IMR-90 (cell line): ENCODE measurements at regions of chr16 and their contacts with region 1.

Region 1: GRCh38 chr16:48143812-48144368 is 11.9 kb downstream of the ABCC12 start:
- DNase-seq: no peak
- ATAC-seq: no peak
- H3K4me3 ChIP-seq: no peak overlapping the region
- H3K27ac ChIP-seq: no peak overlapping the region
- H3K4me1 ChIP-seq: peaks cover 3% of the 10 kb centered on the region; the same call in 1 of the 2 replicates
- H3K27me3 ChIP-seq: no peaks in the 10 kb centered on the region
- CTCF ChIP-seq: no peak
- POLR2A ChIP-seq: no peak
- RAD21 ChIP-seq: no peak

Region 2: GRCh38 chr16:48064971-48065370 is 78.9 kb before region 1 on chr16:
- CTCF ChIA-PET with region 1: no interaction called
- POLR2A ChIA-PET with region 1: no interaction called
- dilution Hi-C with region 1: no loop called
- in situ Hi-C with region 1: no loop called
- intact Hi-C with region 1: loop called (anchors 5 kb)
- DNase-seq: peak; percentile 42
- ATAC-seq: no peak
- H3K4me3 ChIP-seq: no peak overlapping the region
- H3K27ac ChIP-seq: no peak overlapping the region
- H3K4me1 ChIP-seq: no peaks in the 10 kb centered on the region
- H3K27me3 ChIP-seq: peaks cover 12% of the 10 kb centered on the region
- CTCF ChIP-seq: no peak
- POLR2A ChIP-seq: no peak
- RAD21 ChIP-seq: no peak